GM12878 (cell line): ENCODE measurements at regions of chr4 and their contacts with region 1.

Region 1: DNA sequence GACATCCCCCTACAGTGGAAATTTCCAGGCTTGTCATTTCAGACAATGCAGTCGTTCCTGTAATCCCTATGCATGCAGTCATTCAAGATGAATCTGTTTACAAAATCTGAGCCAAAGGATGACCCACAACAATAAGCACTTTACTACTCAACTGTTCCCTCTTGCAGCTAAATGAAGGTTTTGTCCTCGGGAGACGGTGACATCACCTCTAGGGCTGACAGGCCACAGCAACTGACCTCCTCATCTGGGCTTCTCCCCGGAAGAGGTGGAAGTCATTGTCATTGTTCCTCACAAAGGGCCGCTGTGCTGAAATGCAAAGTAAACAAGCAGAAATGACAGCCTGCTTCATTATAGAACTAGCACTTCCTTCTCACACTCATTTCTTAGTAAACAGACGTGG is 29.2 kb downstream of the CLRN2 start:
- DNase-seq: no peak
- ATAC-seq: peak; percentile 41; the same call in 2 of the 3 replicates
- H3K4me3 ChIP-seq: no peak overlapping the region
- H3K27ac ChIP-seq: no peak overlapping the region
- H3K4me1 ChIP-seq: no peaks in the 10 kb centered on the region
- H3K27me3 ChIP-seq: no peaks in the 10 kb centered on the region
- CTCF ChIP-seq: no peak
- EP300 ChIP-seq: no peak
- POLR2A ChIP-seq: no peak
- RAD21 ChIP-seq: no peak

Region 2: DNA sequence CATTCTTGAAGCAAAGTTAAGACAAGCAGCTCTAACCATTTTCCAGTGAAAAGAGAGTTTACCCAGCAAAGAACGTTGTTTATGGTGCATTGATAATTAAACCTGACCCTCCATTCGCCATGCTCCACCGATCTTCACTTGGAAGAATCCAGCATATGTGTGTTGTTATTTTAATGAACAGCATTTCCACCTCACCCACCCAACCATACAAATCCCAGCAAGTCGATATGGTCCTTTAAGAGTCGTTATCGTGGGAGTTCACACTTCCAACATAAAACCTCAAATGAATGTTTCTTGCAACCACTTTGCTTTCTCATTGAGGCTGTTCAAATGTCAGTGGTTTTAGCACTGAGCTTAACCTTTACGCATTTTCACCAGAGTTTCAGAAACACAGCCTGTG is 498.3 kb before region 1 on chr4:
- CTCF ChIA-PET with region 1: no interaction called
- POLR2A ChIA-PET with region 1: no interaction called
- RAD21 ChIA-PET with region 1: no interaction called
- SMC1A ChIA-PET with region 1: no interaction called
- in situ Hi-C with region 1: no loop called
- intact Hi-C with region 1: no loop called
- DNase-seq: no peak
- ATAC-seq: no peak
- H3K4me3 ChIP-seq: no peak overlapping the region
- H3K27ac ChIP-seq: no peak overlapping the region
- H3K4me1 ChIP-seq: no peaks in the 10 kb centered on the region
- H3K27me3 ChIP-seq: no peaks in the 10 kb centered on the region
- CTCF ChIP-seq: no peak
- EP300 ChIP-seq: no peak
- POLR2A ChIP-seq: no peak
- RAD21 ChIP-seq: no peak

Region 3: GRCh38 chr4:17284323-17285175 is 259.7 kb before region 1 on chr4:
- CTCF ChIA-PET with region 1: no interaction called
- POLR2A ChIA-PET with region 1: no interaction called
- RAD21 ChIA-PET with region 1: no interaction called
- SMC1A ChIA-PET with region 1: no interaction called
- in situ Hi-C with region 1: no loop called
- intact Hi-C with region 1: no loop called
- DNase-seq: no peak
- ATAC-seq: no peak
- H3K4me3 ChIP-seq: no peak overlapping the region
- H3K27ac ChIP-seq: no peak overlapping the region
- H3K4me1 ChIP-seq: no peaks in the 10 kb centered on the region
- H3K27me3 ChIP-seq: no peaks in the 10 kb centered on the region
- CTCF ChIP-seq: no peak
- EP300 ChIP-seq: no peak
- POLR2A ChIP-seq: no peak
- RAD21 ChIP-seq: no peak

Region 4: GRCh38 chr4:17502756-17503155 is 41.4 kb before region 1 on chr4:
- CTCF ChIA-PET with region 1: no interaction called
- POLR2A ChIA-PET with region 1: no interaction called
- RAD21 ChIA-PET with region 1: no interaction called
- SMC1A ChIA-PET with region 1: no interaction called
- in situ Hi-C with region 1: no loop called
- intact Hi-C with region 1: no loop called
- DNase-seq: no peak
- ATAC-seq: no peak
- H3K4me3 ChIP-seq: no peak overlapping the region
- H3K27ac ChIP-seq: no peak overlapping the region
- H3K4me1 ChIP-seq: no peaks in the 10 kb centered on the region
- H3K27me3 ChIP-seq: no peaks in the 10 kb centered on the region
- CTCF ChIP-seq: no peak
- EP300 ChIP-seq: no peak
- POLR2A ChIP-seq: no peak
- RAD21 ChIP-seq: no peak

Region 5: GRCh38 chr4:17576932-17577665 is 32.9 kb after region 1 on chr4 and contains the start of gene LAP3:
- CTCF ChIA-PET with region 1: interaction called, 11 read pairs
- POLR2A ChIA-PET with region 1: interaction called, 3 read pairs
- RAD21 ChIA-PET with region 1: interaction called, 11 read pairs
- SMC1A ChIA-PET with region 1: interaction called, 5 read pairs
- in situ Hi-C with region 1: no loop called
- intact Hi-C with region 1: loop called (anchors 1 kb)
- DNase-seq: peak; percentile 91
- ATAC-seq: peak; percentile 90
- H3K4me3 ChIP-seq: peak within 1 kb of the TSS; percentile 97
- H3K27ac ChIP-seq: peak within 1 kb of the TSS; percentile 96
- H3K4me1 ChIP-seq: peaks cover 7% of the 10 kb centered on the region
- H3K27me3 ChIP-seq: no peaks in the 10 kb centered on the region
- CTCF ChIP-seq: no peak
- EP300 ChIP-seq: no peak
- POLR2A ChIP-seq: peak; percentile 99
- RAD21 ChIP-seq: no peak
- polyA plus RNA-seq, gene LAP3: 153 to 206 TPM

Region 6: GRCh38 chr4:17636696-17637622 is 92.8 kb after region 1 on chr4:
- CTCF ChIA-PET with region 1: interaction called, 70 read pairs
- POLR2A ChIA-PET with region 1: interaction called, 5 read pairs
- RAD21 ChIA-PET with region 1: interaction called, 17 read pairs
- SMC1A ChIA-PET with region 1: interaction called, 32 read pairs
- in situ Hi-C with region 1: loop called (anchors 5 kb)
- intact Hi-C with region 1: loop called (anchors 1 kb)
- DNase-seq: no peak
- ATAC-seq: peak; percentile 99
- H3K4me3 ChIP-seq: no peak overlapping the region
- H3K27ac ChIP-seq: no peak overlapping the region
- H3K4me1 ChIP-seq: no peaks in the 10 kb centered on the region
- H3K27me3 ChIP-seq: no peaks in the 10 kb centered on the region
- CTCF ChIP-seq: peak; percentile 81 to 87 (median 81)
- EP300 ChIP-seq: no peak
- POLR2A ChIP-seq: peak; percentile 50
- RAD21 ChIP-seq: peak; percentile 80

Region 7: GRCh38 chr4:18366892-18367291 is 822.7 kb after region 1 on chr4:
- CTCF ChIA-PET with region 1: interaction called, 7 read pairs
- POLR2A ChIA-PET with region 1: no interaction called
- RAD21 ChIA-PET with region 1: interaction called, 4 read pairs
- SMC1A ChIA-PET with region 1: interaction called, 4 read pairs
- in situ Hi-C with region 1: no loop called
- intact Hi-C with region 1: loop called (anchors 2 kb)
- DNase-seq: peak; percentile 7
- ATAC-seq: peak; percentile 99
- H3K4me3 ChIP-seq: no peak overlapping the region
- H3K27ac ChIP-seq: no peak overlapping the region
- H3K4me1 ChIP-seq: no peaks in the 10 kb centered on the region
- H3K27me3 ChIP-seq: no peaks in the 10 kb centered on the region
- CTCF ChIP-seq: peak; percentile 59 to 66 (median 62); a peak in 5 of 6 replicates
- EP300 ChIP-seq: no peak
- POLR2A ChIP-seq: no peak
- RAD21 ChIP-seq: peak; percentile 79